Activated CD8-positive, alpha-beta T cell treated with anti-CD3 and anti-CD28 coated beads, Interleukin-2, amount 10 ng/mL, durations not matched to agents 7 days and 5 days (primary cell): ENCODE measurements at regions of chr9 and their contacts with region 1.

Region 1: DNA sequence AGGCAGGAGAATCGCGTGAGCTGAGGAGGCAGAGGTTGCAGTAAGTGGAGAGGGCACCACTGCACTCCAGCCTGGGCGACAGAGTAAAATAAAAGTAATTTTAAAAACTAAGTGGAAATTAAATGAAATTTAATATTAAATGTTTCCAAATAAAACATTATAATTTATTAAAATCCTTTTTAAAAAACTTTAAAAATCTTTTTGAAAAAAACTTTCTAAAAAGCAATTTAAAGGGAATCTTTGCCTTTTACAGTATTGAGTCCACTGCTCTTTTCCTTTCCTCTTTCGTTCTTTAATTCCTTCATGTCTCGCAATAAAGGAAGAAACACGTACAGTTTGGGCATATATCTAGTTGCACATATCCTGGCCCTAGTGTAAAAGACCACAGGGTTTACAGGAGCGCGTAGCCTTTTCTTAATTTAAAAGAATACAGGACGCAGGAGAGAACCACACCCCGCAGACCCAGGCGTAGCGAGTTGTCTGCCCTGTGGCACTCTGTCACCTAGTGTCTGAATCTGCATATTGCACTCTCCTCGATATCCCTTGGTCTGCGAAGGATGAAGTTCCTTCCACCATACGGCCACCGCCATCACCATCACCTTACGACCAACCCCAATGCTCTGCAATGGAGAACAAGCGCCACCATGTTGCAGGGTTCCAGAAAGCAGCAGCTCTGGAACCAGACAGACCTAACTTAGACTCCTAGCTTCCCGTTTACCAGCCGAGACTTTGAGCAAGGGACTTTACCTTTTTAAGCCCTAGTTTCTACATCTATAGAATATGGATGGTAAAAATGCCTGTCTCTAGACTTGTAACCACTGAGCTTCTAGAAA is 77.6 kb upstream of the DMRT1 start:
- DNase-seq: peak; percentile 74
- ATAC-seq: peak; percentile 99
- H3K4me3 Mint-ChIP-seq: no peak overlapping the region
- H3K27ac Mint-ChIP-seq: no peak overlapping the region
- H3K4me1 Mint-ChIP-seq: peaks cover 22% of the 10 kb centered on the region
- H3K27me3 Mint-ChIP-seq: peaks cover 26% of the 10 kb centered on the region

Region 2: DNA sequence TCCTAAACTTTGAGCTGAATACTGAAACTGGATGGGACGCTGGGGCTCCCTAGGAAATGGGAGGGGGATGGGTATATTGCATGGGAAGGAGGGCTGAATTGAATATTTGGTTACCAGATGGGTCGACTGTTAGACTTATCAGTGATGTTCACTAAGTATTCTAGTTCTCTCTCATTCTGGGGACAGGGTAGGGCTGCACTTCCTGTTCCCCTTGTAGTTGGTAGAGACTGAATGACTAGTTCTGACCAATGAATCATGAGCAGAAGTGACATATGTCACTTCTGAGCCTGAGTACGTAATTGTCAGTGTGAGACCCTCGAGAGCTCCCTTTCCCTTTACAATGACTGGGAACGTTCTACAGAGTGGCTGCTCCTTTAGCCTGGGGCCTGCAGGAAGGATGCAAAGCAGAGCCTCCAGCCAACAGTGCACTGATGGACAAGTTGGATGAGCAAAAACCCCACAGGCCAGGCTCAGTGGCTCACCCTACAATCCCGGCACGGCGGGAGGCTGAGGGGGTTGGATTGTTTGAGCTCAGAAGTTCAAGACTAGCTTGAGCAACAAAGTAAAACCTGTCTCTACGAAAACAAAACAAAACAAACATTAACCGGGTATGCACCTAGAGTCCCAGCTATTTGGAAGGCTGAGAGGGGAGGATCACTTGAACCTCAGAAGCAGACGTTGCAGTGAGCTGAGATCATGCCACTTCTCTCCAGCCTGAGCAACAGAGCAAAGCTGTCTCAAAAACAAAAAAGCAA is 22.3 kb after region 1 on chr9:
- CTCF ChIA-PET with region 1: interaction called, 11 read pairs
- POLR2A ChIA-PET with region 1: no interaction called
- DNase-seq: no peak
- ATAC-seq: no peak
- H3K4me3 Mint-ChIP-seq: no peak overlapping the region
- H3K27ac Mint-ChIP-seq: no peak overlapping the region
- H3K4me1 Mint-ChIP-seq: no peaks in the 10 kb centered on the region
- H3K27me3 Mint-ChIP-seq: peaks cover 9% of the 10 kb centered on the region